Dorsolateral prefrontal cortex (tissue), 120 donors: ENCODE measurements at regions of chr11 and their contacts with region 1.

Region 1: GRCh38 chr11:69918938-69919650 is 99.9 kb upstream of the FGF3 start:
- DNase-seq: peak; percentile 50 to 81 (median 61)
- H3K4me3 ChIP-seq: peak overlapping the region in 3 of 59 donors; percentile 1 to 11 (median 1)
- H3K27ac ChIP-seq: no peak overlapping the region
- H3K27me3 ChIP-seq: peaks cover 0 to 41% (median 7%) of the 10 kb centered on the region in 45 donors
- CTCF ChIP-seq: peak; percentile 73 to 97 (median 90)

Region 2: DNA sequence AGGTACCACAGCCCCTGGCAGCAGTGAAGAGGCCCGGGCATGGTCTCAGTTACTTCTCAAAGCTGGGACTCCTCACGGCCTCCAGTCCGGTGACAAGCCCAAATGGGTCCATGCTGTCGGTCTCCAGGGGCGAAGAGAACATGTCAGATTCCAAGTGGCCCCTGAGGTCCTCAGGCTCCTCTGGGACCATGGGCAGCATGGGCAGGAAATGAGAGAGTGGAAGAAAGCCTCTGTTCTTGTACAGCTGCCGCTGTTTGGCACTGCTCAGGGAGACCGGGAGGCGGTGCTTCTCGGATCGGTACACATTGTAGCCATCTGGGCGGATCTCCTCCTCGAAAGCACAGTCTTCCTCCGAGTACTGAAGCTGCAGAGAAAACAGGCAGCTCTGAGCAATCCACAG is 219.9 kb before region 1 on chr11:
- intact Hi-C with region 1: loop called in 1 of 2 experiments (anchors 10 kb)
- DNase-seq: no peak
- H3K4me3 ChIP-seq: no peak overlapping the region
- H3K27ac ChIP-seq: no peak overlapping the region
- H3K27me3 ChIP-seq: peaks cover 0 to 97% (median 63%) of the 10 kb centered on the region in 45 donors
- CTCF ChIP-seq: no peak

Region 3: GRCh38 chr11:70191495-70192140 is 272.5 kb after region 1 on chr11:
- intact Hi-C with region 1: loop called (anchors 1 to 2 kb)
- DNase-seq: peak in 8 of 10 donors; percentile 11 to 66 (median 42)
- H3K4me3 ChIP-seq: no peak overlapping the region
- H3K27ac ChIP-seq: no peak overlapping the region
- H3K27me3 ChIP-seq: peaks cover 0 to 6% (median 0%) of the 10 kb centered on the region in 45 donors
- CTCF ChIP-seq: peak; percentile 30 to 86 (median 70)